IMR-90 (cell line): ENCODE measurements at regions of chr10 and their contacts with region 1.

Region 1: DNA sequence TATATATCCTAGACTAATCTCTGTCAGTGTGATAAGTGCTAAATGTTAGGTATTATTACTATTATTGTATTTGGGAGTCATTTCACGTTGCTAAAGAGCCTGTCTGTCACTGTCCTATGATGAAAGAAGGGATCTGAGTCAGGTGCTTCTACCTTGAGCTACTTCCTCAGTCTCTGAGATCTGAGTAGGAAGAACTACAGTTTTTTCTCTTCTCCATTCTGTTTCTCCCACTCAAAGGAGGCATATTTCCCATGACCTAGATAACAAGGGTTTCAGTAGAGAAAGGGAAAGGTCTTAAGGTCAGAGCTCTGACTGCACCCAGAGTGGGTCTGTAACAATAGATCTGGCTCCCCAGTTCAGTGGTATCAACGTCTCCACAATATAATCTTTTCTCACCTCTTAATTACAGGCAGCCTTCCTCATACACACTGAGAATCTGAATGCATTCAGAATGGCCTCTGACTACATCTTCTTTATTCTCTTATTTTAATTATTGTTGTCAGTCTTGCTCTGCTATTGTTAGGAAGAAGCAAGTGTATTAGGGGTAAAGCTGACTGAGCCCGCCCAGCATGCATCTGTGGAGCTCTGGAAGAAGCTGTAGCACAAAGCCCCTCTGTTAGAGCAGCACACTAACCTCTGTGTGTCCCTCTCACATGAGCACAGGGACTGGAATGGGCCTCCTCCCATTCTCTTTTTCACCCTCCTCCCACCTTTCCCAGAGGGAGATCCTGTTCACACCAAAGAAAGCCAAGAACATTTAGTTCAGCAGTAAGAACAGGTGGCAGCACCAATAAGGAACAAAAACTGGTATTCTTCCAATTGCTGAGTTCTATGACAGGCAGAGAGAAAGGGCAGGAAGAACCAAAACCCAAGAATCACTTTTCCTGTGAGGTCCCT is 38.1 kb downstream of the USP54 start:
- DNase-seq: no peak
- ATAC-seq: no peak
- H3K4me3 ChIP-seq: no peak overlapping the region
- H3K27ac ChIP-seq: no peak overlapping the region
- H3K4me1 ChIP-seq: no peaks in the 10 kb centered on the region
- H3K27me3 ChIP-seq: no peaks in the 10 kb centered on the region
- CTCF ChIP-seq: no peak
- POLR2A ChIP-seq: no peak
- RAD21 ChIP-seq: no peak

Region 2: DNA sequence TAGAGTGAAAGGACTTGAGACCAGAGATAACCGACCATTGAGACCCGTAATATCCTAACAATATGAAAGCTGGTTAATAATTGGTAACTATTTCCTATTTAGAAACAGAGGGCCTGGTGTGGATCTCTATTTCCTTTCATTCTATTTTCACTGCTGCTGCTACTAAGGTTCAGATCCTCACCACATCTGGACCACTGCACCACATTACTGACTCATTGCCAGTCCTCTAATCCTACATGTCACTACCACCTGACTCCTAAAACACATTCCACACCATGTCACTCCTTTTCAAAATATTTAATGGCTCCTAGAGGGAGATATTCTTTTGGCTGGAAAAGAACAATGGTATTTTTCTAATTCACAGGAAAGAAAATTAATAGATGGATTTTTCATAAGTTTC is 31.7 kb after region 1 on chr10:
- CTCF ChIA-PET with region 1: no interaction called
- POLR2A ChIA-PET with region 1: no interaction called
- dilution Hi-C with region 1: no loop called
- in situ Hi-C with region 1: no loop called
- intact Hi-C with region 1: no loop called
- DNase-seq: peak; percentile 52
- ATAC-seq: no peak
- H3K4me3 ChIP-seq: no peak overlapping the region
- H3K27ac ChIP-seq: no peak overlapping the region
- H3K4me1 ChIP-seq: peaks cover 6% of the 10 kb centered on the region
- H3K27me3 ChIP-seq: no peaks in the 10 kb centered on the region
- CTCF ChIP-seq: no peak
- POLR2A ChIP-seq: no peak
- RAD21 ChIP-seq: no peak

Region 3: GRCh38 chr10:73614720-73615119 is 61.7 kb after region 1 on chr10:
- CTCF ChIA-PET with region 1: no interaction called
- POLR2A ChIA-PET with region 1: no interaction called
- dilution Hi-C with region 1: no loop called
- in situ Hi-C with region 1: no loop called
- intact Hi-C with region 1: loop called (anchors 5 kb)
- DNase-seq: no peak
- ATAC-seq: no peak
- H3K4me3 ChIP-seq: no peak overlapping the region
- H3K27ac ChIP-seq: no peak overlapping the region
- H3K4me1 ChIP-seq: no peaks in the 10 kb centered on the region
- H3K27me3 ChIP-seq: no peaks in the 10 kb centered on the region
- CTCF ChIP-seq: no peak
- POLR2A ChIP-seq: no peak
- RAD21 ChIP-seq: no peak